Activated B cell treated with CpG ODN at 0.5 μM for 24 hours (primary cell): ENCODE measurements at regions of chr2 and their contacts with region 1.

Region 1: DNA sequence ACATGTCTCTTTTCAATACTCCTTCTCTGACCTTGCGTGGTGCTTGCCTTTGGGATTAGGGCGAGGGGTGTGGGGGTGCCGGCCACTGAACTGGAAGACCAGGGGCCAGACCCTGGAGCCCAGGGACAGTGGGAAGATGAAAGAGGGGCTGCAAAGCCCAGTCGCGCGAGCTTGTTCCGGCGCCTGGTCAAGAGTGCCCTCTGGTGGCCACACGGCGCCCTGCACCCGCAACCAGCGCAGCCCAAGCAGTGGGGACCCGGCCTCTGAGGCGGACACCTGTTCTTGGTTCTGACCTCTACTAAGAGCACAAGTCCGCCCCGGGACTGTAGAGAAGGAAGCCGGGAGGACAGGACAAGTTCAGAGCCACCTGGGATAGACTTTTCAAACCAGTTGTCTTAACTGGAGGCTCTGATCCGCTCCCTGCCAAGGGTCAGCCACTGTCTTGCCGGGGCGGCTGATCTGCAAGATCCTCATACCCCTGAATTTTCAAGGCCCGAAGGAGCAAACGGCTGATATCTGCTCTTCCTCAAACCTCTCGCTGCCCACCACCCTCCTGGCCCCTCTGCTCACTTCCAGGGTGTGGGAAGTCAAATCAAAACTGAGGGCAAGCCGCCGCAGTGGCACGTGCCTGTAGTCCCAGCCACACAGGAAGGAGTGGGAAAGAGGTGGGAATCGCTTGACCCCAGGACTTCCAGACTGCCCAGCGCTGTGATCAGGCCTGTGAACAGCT is 14.9 kb upstream of the MSH6 start:
- DNase-seq: peak; percentile 82
- ATAC-seq: peak; percentile 95
- H3K4me3 Mint-ChIP-seq: peak overlapping the region; percentile 55
- H3K27ac Mint-ChIP-seq: peak overlapping the region; percentile 57
- H3K4me1 Mint-ChIP-seq: peaks cover 6% of the 10 kb centered on the region
- H3K27me3 Mint-ChIP-seq: no peaks in the 10 kb centered on the region
- CTCF ChIP-seq: peak; percentile 97

Region 2: GRCh38 chr2:47334356-47335136 is 433.5 kb before region 1 on chr2:
- CTCF ChIA-PET with region 1: interaction called, 77 read pairs
- POLR2A ChIA-PET with region 1: interaction called, 5 read pairs
- intact Hi-C with region 1: loop called (anchors 1 kb)
- DNase-seq: no peak
- ATAC-seq: no peak
- H3K4me3 Mint-ChIP-seq: no peak overlapping the region
- H3K27ac Mint-ChIP-seq: no peak overlapping the region
- H3K4me1 Mint-ChIP-seq: peaks cover 22% of the 10 kb centered on the region
- H3K27me3 Mint-ChIP-seq: no peaks in the 10 kb centered on the region
- CTCF ChIP-seq: no peak

Region 3: DNA sequence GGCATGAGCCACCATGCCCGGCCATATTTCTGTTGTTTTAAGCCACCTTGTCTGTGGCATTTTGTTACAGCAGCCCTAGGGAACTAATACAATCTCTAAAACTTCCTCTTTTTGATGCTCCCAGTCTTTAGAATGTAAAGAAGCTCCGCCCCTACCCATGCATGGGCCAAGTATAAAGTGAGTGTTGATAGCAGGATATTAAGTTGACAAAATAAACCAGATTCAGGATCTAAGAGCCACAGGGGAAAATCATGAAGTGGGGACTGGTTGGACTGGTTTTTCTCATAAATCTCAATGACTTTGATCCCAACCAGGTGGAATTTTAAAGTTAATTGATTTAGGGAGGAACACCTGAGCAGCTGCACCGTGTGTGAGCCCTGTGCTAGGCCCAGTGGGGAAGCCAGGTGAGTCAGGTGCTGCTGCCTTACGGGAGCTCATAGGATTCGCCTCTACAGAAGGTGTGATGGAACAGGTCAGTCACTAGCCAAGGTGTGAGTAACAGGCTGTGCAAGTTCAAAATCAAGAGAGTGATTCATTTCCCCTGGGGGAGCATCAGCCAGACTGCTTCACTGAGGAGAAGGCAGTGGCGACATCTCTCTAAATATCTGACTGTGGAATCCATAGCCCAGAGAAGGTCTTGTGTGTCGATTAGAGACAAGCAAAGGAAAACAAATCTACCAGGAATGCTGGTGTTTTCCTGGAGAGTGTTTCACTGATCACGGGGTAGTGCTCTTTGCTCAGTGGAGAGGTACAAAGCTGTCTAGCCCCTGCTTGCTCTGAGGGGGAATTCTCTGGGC is 428.1 kb before region 1 on chr2:
- CTCF ChIA-PET with region 1: interaction called, 77 read pairs
- POLR2A ChIA-PET with region 1: interaction called, 5 read pairs
- intact Hi-C with region 1: loop called (anchors 1 kb)
- DNase-seq: no peak
- ATAC-seq: peak; percentile 30
- H3K4me3 Mint-ChIP-seq: no peak overlapping the region
- H3K27ac Mint-ChIP-seq: no peak overlapping the region
- H3K4me1 Mint-ChIP-seq: peaks cover 30% of the 10 kb centered on the region
- H3K27me3 Mint-ChIP-seq: peaks cover 7% of the 10 kb centered on the region
- CTCF ChIP-seq: no peak

Region 4: GRCh38 chr2:47386551-47386950 is 381.5 kb before region 1 on chr2:
- CTCF ChIA-PET with region 1: interaction called, 12 read pairs
- POLR2A ChIA-PET with region 1: interaction called, 4 read pairs
- intact Hi-C with region 1: loop called (anchors 1 kb)
- DNase-seq: no peak
- ATAC-seq: no peak
- H3K4me3 Mint-ChIP-seq: no peak overlapping the region
- H3K27ac Mint-ChIP-seq: no peak overlapping the region
- H3K4me1 Mint-ChIP-seq: no peaks in the 10 kb centered on the region
- H3K27me3 Mint-ChIP-seq: no peaks in the 10 kb centered on the region
- CTCF ChIP-seq: no peak

Region 5: GRCh38 chr2:47437287-47437686 is 330.8 kb before region 1 on chr2:
- CTCF ChIA-PET with region 1: interaction called, 68 read pairs
- POLR2A ChIA-PET with region 1: interaction called, 6 read pairs
- intact Hi-C with region 1: loop called (anchors 1 kb)
- DNase-seq: no peak
- ATAC-seq: no peak
- H3K4me3 Mint-ChIP-seq: no peak overlapping the region
- H3K27ac Mint-ChIP-seq: no peak overlapping the region
- H3K4me1 Mint-ChIP-seq: no peaks in the 10 kb centered on the region
- H3K27me3 Mint-ChIP-seq: no peaks in the 10 kb centered on the region
- CTCF ChIP-seq: no peak

Region 6: DNA sequence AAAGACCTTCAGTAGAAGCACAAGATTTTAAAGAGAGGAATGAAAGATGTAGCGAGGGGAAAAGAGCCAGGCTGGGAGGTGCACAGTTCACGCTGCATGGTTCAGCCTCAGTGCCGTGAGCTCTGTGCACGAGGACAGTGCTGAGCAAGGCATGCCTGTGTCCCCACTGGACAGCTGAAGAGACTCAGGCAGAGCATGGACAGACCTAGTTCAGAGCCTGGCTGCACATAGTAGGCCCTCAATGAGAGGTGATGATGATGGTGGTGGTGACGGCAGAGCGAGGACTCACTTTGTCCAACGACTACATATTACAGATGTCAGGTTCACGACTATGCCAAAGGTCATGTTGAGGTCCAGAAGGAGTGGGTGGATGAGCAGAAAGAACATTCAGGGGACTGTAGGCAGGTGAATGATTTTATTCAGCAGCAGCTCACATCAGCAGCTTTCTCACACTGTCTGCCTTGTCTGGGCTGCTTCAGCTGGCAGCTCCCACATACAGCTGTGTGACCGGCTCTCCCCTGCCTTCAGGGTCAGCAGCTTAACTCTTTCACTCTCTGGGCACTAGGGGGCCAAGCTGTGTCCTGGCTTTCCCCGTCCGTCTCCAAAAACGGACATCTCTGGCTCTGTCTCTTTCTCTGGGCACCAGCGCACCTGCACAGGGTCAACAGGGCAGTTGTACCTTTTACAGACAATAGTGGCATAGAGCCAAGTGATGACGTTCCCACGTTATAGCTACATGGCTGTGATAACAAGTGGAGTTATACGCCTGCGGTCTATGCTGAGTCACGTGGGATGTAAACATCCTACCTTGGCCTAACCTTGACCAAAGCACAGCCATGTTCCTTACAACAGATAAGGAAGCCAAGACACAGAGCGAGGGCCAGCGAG is 113.9 kb before region 1 on chr2:
- CTCF ChIA-PET with region 1: interaction called, 11 read pairs
- POLR2A ChIA-PET with region 1: interaction called, 3 read pairs
- intact Hi-C with region 1: loop called (anchors 1 kb)
- DNase-seq: no peak
- ATAC-seq: no peak
- H3K4me3 Mint-ChIP-seq: peak overlapping the region; percentile 51
- H3K27ac Mint-ChIP-seq: peak overlapping the region; percentile 90
- H3K4me1 Mint-ChIP-seq: peaks cover 51% of the 10 kb centered on the region
- H3K27me3 Mint-ChIP-seq: no peaks in the 10 kb centered on the region
- CTCF ChIP-seq: no peak

Region 7: GRCh38 chr2:47697000-47697601 is 70.9 kb before region 1 on chr2:
- CTCF ChIA-PET with region 1: interaction called, 10 read pairs
- POLR2A ChIA-PET with region 1: interaction called, 9 read pairs
- intact Hi-C with region 1: no loop called
- DNase-seq: no peak
- ATAC-seq: peak; percentile 51
- H3K4me3 Mint-ChIP-seq: peak overlapping the region; percentile 67
- H3K27ac Mint-ChIP-seq: peak overlapping the region; percentile 87
- H3K4me1 Mint-ChIP-seq: peaks cover 67% of the 10 kb centered on the region
- H3K27me3 Mint-ChIP-seq: peaks cover 2% of the 10 kb centered on the region
- CTCF ChIP-seq: no peak

Region 8: DNA sequence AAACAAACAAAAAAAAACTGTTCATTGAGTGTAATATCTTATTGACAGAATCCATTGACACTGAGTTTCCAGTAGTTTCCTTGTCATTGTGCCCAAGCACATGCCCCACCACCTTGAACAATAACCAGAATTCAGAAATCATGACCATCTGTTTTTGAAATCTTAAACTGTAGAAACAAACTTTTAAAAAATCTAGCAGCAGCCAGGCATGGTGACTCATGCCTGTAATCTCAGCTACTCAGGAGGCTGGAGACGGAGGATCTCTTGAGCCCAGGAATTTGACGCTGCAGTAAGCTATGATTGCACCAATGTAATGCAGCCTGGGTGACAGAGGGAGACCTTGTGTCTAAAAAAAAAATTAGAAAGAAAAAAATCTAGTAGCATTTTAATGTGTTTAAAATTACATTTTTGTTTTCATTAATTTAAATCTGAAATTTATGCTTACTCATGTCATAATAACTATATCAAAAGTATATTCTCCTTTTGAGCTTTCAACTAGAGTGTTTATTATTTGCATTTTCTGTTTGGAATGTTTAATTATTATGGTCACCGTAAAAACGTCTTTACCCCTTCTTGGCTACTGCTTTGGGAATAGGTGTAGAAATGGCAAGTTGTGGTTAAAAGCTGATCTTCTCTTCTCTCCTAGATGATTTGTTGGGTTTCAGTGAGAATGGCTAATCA is 736.7 kb after region 1 on chr2:
- CTCF ChIA-PET with region 1: no interaction called
- POLR2A ChIA-PET with region 1: no interaction called
- intact Hi-C with region 1: no loop called
- DNase-seq: no peak
- ATAC-seq: no peak
- H3K4me3 Mint-ChIP-seq: no peak overlapping the region
- H3K27ac Mint-ChIP-seq: no peak overlapping the region
- H3K4me1 Mint-ChIP-seq: peaks cover 3% of the 10 kb centered on the region
- H3K27me3 Mint-ChIP-seq: no peaks in the 10 kb centered on the region
- CTCF ChIP-seq: no peak

Region 9: GRCh38 chr2:48799601-48800000 is 1031.6 kb after region 1 on chr2:
- CTCF ChIA-PET with region 1: no interaction called
- POLR2A ChIA-PET with region 1: no interaction called
- intact Hi-C with region 1: no loop called
- DNase-seq: no peak
- ATAC-seq: no peak
- H3K4me3 Mint-ChIP-seq: no peak overlapping the region
- H3K27ac Mint-ChIP-seq: no peak overlapping the region
- H3K4me1 Mint-ChIP-seq: no peaks in the 10 kb centered on the region
- H3K27me3 Mint-ChIP-seq: no peaks in the 10 kb centered on the region
- CTCF ChIP-seq: no peak